Posterior vena cava (tissue), 2 donors: ENCODE measurements at regions of chr20 and their contacts with region 1.

Region 1: DNA sequence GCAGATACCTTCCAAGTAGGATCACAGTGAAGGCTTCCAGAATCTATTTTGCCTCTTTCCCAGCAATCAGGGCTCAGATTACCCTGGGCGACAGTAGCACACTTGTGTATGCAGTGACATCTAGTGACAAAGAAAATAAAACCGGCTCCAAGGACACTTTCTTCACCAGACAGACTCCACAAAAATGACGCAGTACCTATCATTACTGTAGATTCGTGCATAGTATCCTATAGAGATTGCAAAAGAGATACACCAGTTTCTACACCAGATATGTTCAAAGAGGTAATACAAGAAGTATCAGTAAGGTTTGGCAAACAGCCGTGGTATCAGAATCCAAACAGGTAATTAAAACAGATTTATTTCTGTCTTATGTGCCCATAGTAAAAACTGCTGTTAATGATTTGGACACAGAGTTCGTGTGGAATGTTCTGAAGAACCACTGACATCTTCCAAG is 600.4 kb upstream of the JAG1 start:
- DNase-seq: no peak

Region 2: GRCh38 chr20:10673988-10674711 is 600.0 kb before region 1 on chr20 and contains the start of gene JAG1:
- intact Hi-C with region 1: loop called in 1 of 2 experiments (anchors 5 kb)
- DNase-seq: peak; percentile 99
- total RNA-seq, gene JAG1: 68.5 to 84.2 TPM

Region 3: GRCh38 chr20:11255860-11256259 is 18.3 kb before region 1 on chr20:
- intact Hi-C with region 1: loop called in 1 of 2 experiments (anchors 2 kb)
- DNase-seq: no peak